CD4-positive, alpha-beta T cell (primary cell): ENCODE measurements at regions of chr7 and their contacts with region 1.

Region 1: DNA sequence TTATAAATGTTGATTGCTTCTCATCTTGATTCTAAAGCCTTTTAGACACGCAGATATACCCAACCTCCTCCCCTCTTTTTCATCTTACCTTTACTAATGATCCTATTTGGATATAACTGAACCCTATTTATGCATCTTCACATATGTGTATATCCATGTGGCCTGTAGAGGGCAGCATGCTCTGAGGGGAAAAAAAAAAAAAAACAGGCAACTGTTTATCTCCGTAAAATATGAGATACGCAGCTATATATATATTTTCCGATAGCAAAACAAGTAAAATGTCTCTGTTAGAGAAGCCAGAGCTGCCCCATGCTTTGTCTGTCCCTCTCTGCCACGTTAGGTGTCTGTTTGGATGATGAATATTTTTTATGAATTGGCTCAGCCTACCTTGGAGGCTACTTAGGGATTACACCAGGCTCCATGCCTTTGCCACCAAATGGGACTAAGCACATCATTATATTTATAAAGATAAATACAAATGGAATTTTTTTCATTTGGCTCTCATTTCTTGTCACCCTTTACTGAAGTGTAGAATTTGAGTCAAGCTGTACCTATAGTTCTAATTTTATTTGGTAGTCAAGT is 174.8 kb upstream of the FZD1 start:
- DNase-seq: peak in 3 of 14 experiments; percentile 39 to 57 (median 45)
- ATAC-seq: peak; percentile 38
- H3K4me3 ChIP-seq: no peak overlapping the region
- H3K4me3 Mint-ChIP-seq: no peak overlapping the region
- H3K27ac ChIP-seq: no peak overlapping the region
- H3K27ac Mint-ChIP-seq: no peak overlapping the region
- H3K4me1 ChIP-seq: peaks cover 12% of the 10 kb centered on the region
- H3K4me1 Mint-ChIP-seq: peaks cover 19% of the 10 kb centered on the region
- H3K27me3 ChIP-seq: no peaks in the 10 kb centered on the region
- H3K27me3 Mint-ChIP-seq: no peaks in the 10 kb centered on the region
- CTCF ChIP-seq: peak; percentile 70

Region 2: DNA sequence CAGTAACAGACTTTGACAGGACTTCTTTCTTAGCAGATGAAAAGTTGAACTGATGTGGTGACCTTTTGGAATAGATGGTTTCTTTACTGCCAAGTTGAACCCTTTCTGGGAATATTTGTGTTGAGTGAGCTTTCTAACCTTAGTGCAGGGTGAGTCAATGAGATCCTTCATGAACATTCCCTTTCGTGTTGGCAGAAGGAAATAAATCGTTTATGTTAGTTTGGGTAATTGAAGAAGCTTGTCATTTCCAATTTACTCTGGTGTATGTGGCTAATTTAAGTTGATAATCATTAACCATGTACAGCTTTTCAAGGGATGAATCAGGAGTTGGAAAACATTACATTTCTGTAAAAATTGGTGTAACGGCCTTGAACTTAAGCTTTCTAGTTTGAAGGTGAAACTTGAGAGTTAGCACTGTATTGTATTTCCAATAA is 576.6 kb before region 1 on chr7:
- CTCF ChIA-PET with region 1: no interaction called
- POLR2A ChIA-PET with region 1: no interaction called
- intact Hi-C with region 1: no loop called
- DNase-seq: no peak
- ATAC-seq: no peak
- H3K4me3 ChIP-seq: no peak overlapping the region
- H3K4me3 Mint-ChIP-seq: no peak overlapping the region
- H3K27ac ChIP-seq: no peak overlapping the region
- H3K27ac Mint-ChIP-seq: no peak overlapping the region
- H3K4me1 ChIP-seq: no peaks in the 10 kb centered on the region
- H3K4me1 Mint-ChIP-seq: no peaks in the 10 kb centered on the region
- H3K27me3 ChIP-seq: no peaks in the 10 kb centered on the region
- H3K27me3 Mint-ChIP-seq: no peaks in the 10 kb centered on the region
- CTCF ChIP-seq: no peak

Region 3: DNA sequence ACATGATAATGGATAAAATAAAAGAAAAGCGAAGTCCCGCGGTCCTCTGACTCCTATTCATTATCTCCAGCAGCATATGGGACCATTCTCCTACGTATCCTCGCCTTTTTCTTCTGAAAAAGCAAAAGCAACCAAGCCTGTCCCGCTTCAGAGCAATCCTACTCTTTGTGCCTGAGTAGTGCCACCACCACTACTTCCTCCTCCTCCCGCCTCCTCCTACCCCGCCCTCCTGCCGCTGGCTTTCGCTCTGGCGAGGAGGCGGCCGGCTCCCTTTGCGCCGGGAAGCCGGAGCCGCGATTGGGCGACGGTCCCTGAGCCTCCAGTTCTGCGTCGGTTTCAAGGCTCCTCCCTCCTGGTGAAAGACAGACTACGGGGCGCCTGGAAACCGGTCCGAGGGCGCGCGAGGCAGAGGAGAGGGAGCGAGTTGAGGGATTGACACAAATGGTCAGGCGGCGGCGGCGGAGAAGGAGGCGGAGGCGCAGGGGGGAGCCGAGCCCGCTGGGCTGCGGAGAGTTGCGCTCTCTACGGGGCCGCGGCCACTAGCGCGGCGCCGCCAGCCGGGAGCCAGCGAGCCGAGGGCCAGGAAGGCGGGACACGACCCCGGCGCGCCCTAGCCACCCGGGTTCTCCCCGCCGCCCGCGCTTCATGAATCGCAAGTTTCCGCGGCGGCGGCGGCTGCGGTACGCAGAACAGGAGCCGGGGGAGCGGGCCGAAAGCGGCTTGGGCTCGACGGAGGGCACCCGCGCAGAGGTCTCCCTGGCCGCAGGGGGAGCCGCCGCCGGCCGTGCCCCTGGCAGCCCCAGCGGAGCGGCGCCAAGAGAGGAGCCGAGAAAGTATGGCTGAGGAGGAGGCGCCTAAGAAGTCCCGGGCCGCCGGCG is 174.8 kb after region 1 on chr7 and contains the start of gene FZD1:
- CTCF ChIA-PET with region 1: no interaction called
- POLR2A ChIA-PET with region 1: no interaction called
- intact Hi-C with region 1: loop called (anchors 10 kb)
- DNase-seq: peak in 8 of 14 experiments; percentile 13 to 77 (median 46)
- ATAC-seq: peak; percentile 74
- H3K4me3 ChIP-seq: peak within 1 kb of the TSS; percentile 45
- H3K4me3 Mint-ChIP-seq: peak within 1 kb of the TSS; percentile 88
- H3K27ac ChIP-seq: no peak within 1 kb of the TSS
- H3K27ac Mint-ChIP-seq: no peak within 1 kb of the TSS
- H3K4me1 ChIP-seq: peaks cover 13% of the 10 kb centered on the region
- H3K4me1 Mint-ChIP-seq: no peaks in the 10 kb centered on the region
- H3K27me3 ChIP-seq: peaks cover 30 to 39% of the 10 kb centered on the region in 2 experiments
- H3K27me3 Mint-ChIP-seq: peaks cover 47% of the 10 kb centered on the region
- CTCF ChIP-seq: no peak
- total RNA-seq, gene FZD1: 0.22 to 0.28 TPM

Region 4: GRCh38 chr7:92057362-92057761 is 967.9 kb after region 1 on chr7:
- CTCF ChIA-PET with region 1: no interaction called
- POLR2A ChIA-PET with region 1: no interaction called
- intact Hi-C with region 1: loop called in 1 of 2 experiments (anchors 10 kb)
- DNase-seq: no peak
- ATAC-seq: no peak
- H3K4me3 ChIP-seq: no peak overlapping the region
- H3K4me3 Mint-ChIP-seq: no peak overlapping the region
- H3K27ac ChIP-seq: no peak overlapping the region
- H3K27ac Mint-ChIP-seq: peak overlapping the region; percentile 3
- H3K4me1 ChIP-seq: no peaks in the 10 kb centered on the region
- H3K4me1 Mint-ChIP-seq: peaks cover 29% of the 10 kb centered on the region
- H3K27me3 ChIP-seq: no peaks in the 10 kb centered on the region
- H3K27me3 Mint-ChIP-seq: no peaks in the 10 kb centered on the region
- CTCF ChIP-seq: no peak